Right cardiac atrium (tissue), 5 donors: ENCODE measurements at regions of chr15 and their contacts with region 1.

Region 1: DNA sequence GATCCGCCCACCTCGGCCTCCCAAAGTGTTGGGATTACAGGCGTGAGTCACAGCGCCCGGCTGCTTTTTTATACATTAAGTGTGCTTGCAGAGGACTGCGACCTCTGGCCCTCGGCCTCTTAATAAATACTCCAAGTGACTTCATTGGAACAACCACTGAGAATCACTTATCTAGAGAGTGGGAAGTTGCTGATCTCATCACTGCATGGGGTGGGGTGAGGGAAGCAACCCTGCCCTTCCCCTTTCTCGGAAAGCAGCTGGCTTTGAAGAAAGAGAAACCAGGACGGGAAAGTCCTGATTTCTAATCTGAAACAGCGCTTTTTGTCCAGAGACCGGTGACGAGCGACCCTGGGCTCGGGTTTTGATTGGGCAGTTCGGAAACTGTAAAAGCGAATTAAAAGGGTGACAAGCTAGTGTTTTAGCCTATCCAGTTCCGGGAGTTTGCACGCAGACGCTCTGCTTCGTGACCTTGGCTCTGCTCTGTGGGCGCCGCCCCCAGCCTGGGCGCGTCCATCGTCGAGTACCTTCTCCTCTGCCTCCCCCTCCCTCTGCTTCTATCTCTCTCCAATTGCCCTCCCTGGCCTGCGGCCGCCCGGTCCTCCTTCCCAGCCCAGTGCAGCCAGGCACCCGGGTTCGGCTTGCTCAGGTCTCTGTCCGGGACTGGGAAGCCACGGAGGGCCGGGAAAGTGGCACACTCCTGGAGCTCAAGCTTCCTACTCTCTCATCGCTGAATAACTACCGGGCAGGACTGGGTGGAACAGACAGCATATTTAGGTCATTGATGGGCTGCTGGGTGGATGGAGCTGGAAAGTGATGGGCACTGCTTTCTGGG is 7.5 kb upstream of the TRIM69 start:
- DNase-seq: peak; percentile 95 to 99 (median 97)
- ATAC-seq: peak; percentile 97 to 98
- H3K4me3 ChIP-seq: peak overlapping the region; percentile 65
- H3K27ac ChIP-seq: peak overlapping the region; percentile 99
- H3K4me1 ChIP-seq: no peaks in the 10 kb centered on the region
- H3K27me3 ChIP-seq: no peaks in the 10 kb centered on the region

Region 2: GRCh38 chr15:44663409-44664308 is 65.1 kb before region 1 on chr15 and contains the start of gene SPG11:
- intact Hi-C with region 1: loop called in 1 of 4 experiments (anchors 2 kb)
- DNase-seq: peak; percentile 98 to 99 (median 99)
- ATAC-seq: peak; percentile 99
- H3K4me3 ChIP-seq: peak within 1 kb of the TSS; percentile 75
- H3K27ac ChIP-seq: peak within 1 kb of the TSS; percentile 91
- H3K4me1 ChIP-seq: no peaks in the 10 kb centered on the region
- H3K27me3 ChIP-seq: no peaks in the 10 kb centered on the region
- total RNA-seq, gene SPG11: 38.8 to 45.7 (median 42.4) TPM

Region 3: GRCh38 chr15:44711356-44712107 is 17.3 kb before region 1 on chr15 and contains the start of gene B2M:
- intact Hi-C with region 1: loop called in 2 of 4 experiments (anchors 2 kb)
- DNase-seq: peak; percentile 94 to 98 (median 98)
- ATAC-seq: peak; percentile 96 to 97
- H3K4me3 ChIP-seq: peak within 1 kb of the TSS; percentile 76
- H3K27ac ChIP-seq: peak within 1 kb of the TSS; percentile 97
- H3K4me1 ChIP-seq: peaks cover 2% of the 10 kb centered on the region
- H3K27me3 ChIP-seq: no peaks in the 10 kb centered on the region
- total RNA-seq, gene B2M: 1,377 to 1,599 (median 1,490) TPM